Activated CD4-positive, alpha-beta memory T cell treated with anti-CD3 and anti-CD28 coated beads for 36 hours (primary cell): ENCODE measurements at regions of chr7 and their contacts with region 1.

Region 1: DNA sequence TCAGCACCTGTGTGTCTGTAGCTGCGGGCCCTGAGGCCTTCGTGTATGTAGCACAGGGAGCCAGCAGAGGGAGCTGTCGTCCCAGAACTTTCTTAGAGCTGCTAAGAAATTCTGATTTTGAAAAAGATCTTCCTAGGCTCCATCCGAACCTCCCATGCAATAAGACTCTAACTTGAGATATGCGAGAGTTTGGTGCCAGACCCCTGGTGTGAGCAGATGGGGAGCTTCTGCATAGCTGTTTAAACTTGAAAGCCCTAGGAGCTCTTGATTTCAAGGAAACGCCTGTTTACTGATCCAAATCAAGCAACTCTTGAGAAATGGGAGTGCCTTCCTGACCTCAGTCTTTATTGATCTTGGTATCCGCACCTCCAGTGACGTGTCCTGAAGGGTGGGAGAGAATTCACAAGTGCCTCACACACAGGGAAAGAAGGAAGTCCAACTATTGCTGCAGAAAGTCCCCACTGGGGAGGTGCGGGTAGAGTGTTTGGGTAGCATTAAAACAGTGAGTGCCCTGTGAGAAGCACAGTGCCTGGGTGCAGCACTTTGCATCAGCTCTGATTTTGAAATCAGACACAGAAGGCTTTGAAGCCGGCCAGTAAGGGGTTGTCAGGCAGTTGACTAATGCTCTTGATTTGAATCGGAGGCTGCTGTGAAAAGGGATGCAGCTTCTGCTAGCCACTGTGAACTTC is 66.4 kb upstream of the STRIP2 start:
- DNase-seq: peak; percentile 90
- H3K4me3 Mint-ChIP-seq: peak overlapping the region; percentile 52
- H3K27ac Mint-ChIP-seq: peak overlapping the region; percentile 84
- H3K4me1 Mint-ChIP-seq: peaks cover 39% of the 10 kb centered on the region
- H3K27me3 Mint-ChIP-seq: no peaks in the 10 kb centered on the region

Region 2: GRCh38 chr7:129224251-129225205 is 143.3 kb before region 1 on chr7 and contains the start of gene AHCYL2:
- CTCF ChIA-PET with region 1: interaction called, 24 read pairs
- POLR2A ChIA-PET with region 1: no interaction called
- intact Hi-C with region 1: loop called (anchors 1 kb)
- DNase-seq: peak; percentile 99
- H3K4me3 Mint-ChIP-seq: peak within 1 kb of the TSS; percentile 87
- H3K27ac Mint-ChIP-seq: peak within 1 kb of the TSS; percentile 91
- H3K4me1 Mint-ChIP-seq: peaks cover 27% of the 10 kb centered on the region
- H3K27me3 Mint-ChIP-seq: no peaks in the 10 kb centered on the region
- total RNA-seq, gene AHCYL2: 16.4 to 17.1 TPM

Region 3: GRCh38 chr7:129381710-129382484 is 14.1 kb after region 1 on chr7:
- CTCF ChIA-PET with region 1: interaction called, 145 read pairs
- POLR2A ChIA-PET with region 1: interaction called, 5 read pairs
- intact Hi-C with region 1: loop called (anchors 1 kb)
- DNase-seq: no peak
- H3K4me3 Mint-ChIP-seq: no peak overlapping the region
- H3K27ac Mint-ChIP-seq: peak overlapping the region; percentile 69
- H3K4me1 Mint-ChIP-seq: peaks cover 27% of the 10 kb centered on the region
- H3K27me3 Mint-ChIP-seq: no peaks in the 10 kb centered on the region

Region 4: DNA sequence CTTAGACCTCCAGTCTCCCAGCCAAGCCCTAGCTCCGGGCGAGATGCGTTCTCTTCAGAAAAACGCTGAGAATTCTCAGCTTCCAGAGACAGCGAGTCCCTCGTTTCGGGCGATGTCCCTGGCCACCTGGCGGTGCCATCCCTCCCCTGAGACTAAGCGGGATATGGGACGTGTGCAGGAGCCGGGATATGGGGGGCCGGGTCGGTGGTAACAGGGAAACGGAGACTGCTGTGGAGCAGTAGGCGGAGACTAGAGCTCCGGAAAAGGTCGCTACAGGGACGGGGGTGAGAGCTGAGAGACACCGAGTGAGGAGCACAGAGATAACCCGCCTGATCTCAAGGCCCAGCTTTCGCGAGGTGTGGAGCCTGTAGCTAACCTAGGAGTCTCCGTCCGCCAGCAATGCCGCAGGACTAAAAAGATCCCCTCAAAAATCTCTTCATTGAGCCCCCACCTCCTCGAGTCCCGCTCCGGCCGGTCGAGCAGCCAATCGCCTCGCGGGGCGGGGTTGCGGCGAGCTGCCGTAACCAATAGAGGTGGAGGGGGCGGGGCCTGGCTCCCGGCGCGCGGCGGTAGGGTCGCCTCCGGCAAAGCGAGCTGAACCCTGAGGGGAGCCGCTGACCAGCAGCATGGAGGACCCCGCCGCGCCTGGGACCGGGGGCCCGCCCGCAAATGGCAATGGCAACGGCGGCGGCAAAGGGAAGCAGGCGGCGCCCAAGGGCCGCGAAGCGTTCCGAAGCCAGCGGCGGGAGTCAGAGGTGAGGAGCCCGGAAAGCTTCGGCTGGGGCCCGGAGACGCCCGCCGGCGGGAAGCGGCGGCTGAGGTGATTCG is 66.2 kb after region 1 on chr7 and contains the start of gene STRIP2:
- CTCF ChIA-PET with region 1: interaction called, 46 read pairs
- POLR2A ChIA-PET with region 1: interaction called, 14 read pairs
- intact Hi-C with region 1: loop called (anchors 1 kb)
- DNase-seq: peak; percentile 95
- H3K4me3 Mint-ChIP-seq: peak within 1 kb of the TSS; percentile 86
- H3K27ac Mint-ChIP-seq: peak within 1 kb of the TSS; percentile 83
- H3K4me1 Mint-ChIP-seq: peaks cover 28% of the 10 kb centered on the region
- H3K27me3 Mint-ChIP-seq: peaks cover 6% of the 10 kb centered on the region
- total RNA-seq, gene STRIP2: 56.1 to 62.0 TPM

Region 5: GRCh38 chr7:129543816-129544215 is 176.0 kb after region 1 on chr7:
- CTCF ChIA-PET with region 1: no interaction called
- POLR2A ChIA-PET with region 1: no interaction called
- intact Hi-C with region 1: no loop called
- DNase-seq: no peak
- H3K4me3 Mint-ChIP-seq: no peak overlapping the region
- H3K27ac Mint-ChIP-seq: no peak overlapping the region
- H3K4me1 Mint-ChIP-seq: peaks cover 3% of the 10 kb centered on the region
- H3K27me3 Mint-ChIP-seq: peaks cover 11% of the 10 kb centered on the region

Region 6: GRCh38 chr7:129611246-129612111 is 243.6 kb after region 1 on chr7 and contains the start of gene NRF1:
- CTCF ChIA-PET with region 1: interaction called, 11 read pairs
- POLR2A ChIA-PET with region 1: interaction called, 4 read pairs
- intact Hi-C with region 1: loop called (anchors 1 kb)
- DNase-seq: peak; percentile 92
- H3K4me3 Mint-ChIP-seq: peak within 1 kb of the TSS; percentile 95
- H3K27ac Mint-ChIP-seq: peak within 1 kb of the TSS; percentile 97
- H3K4me1 Mint-ChIP-seq: peaks cover 53% of the 10 kb centered on the region
- H3K27me3 Mint-ChIP-seq: no peaks in the 10 kb centered on the region
- total RNA-seq, gene NRF1: 19.9 to 20.4 TPM

Region 7: DNA sequence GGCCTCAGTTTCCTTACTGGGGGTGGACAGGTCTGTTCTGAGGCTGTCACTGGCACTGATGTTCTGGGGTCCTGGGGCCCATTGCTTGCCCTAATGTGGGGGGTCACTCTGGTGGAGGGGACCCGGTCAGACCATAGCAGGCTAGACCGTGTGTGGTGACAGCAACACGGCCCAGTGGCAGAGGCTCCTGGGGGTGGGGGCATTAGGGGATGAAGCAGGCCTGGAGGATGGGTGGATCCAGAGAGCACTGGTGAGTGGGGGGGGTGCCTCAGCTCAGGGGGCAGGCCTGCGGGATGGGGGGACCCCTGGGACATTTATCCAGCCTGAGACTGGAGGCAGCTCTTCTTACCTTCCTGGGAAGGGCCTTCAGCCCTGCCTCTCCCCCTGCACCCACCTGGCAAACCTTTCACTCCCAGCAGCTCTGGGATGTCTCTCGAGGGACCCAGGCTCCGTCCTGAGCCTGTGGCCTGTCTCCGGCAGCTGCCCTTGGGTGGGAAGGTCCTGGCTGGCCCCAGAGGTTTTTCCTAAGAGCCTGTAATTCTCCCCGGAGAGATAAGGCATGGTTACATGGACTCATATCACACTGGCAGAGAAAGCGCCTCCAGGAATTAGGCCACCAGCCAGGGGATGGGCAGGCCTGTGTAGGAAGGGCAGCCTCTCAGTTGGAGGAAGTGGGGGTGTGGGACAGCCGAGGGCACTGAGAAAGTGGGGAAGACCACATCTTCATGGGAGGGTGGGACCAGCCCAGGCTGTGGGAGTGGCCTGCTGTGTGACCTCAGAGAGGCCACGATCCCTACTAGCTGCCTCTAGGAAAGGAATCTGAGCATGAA is 437.3 kb after region 1 on chr7:
- CTCF ChIA-PET with region 1: no interaction called
- POLR2A ChIA-PET with region 1: no interaction called
- intact Hi-C with region 1: no loop called
- DNase-seq: no peak
- H3K4me3 Mint-ChIP-seq: no peak overlapping the region
- H3K27ac Mint-ChIP-seq: no peak overlapping the region
- H3K4me1 Mint-ChIP-seq: no peaks in the 10 kb centered on the region
- H3K27me3 Mint-ChIP-seq: no peaks in the 10 kb centered on the region

Region 8: GRCh38 chr7:129825496-129826267 is 457.8 kb after region 1 on chr7:
- CTCF ChIA-PET with region 1: interaction called, 20 read pairs
- POLR2A ChIA-PET with region 1: no interaction called
- intact Hi-C with region 1: loop called (anchors 5 kb)
- DNase-seq: peak; percentile 92
- H3K4me3 Mint-ChIP-seq: peak overlapping the region; percentile 89
- H3K27ac Mint-ChIP-seq: no peak overlapping the region
- H3K4me1 Mint-ChIP-seq: peaks cover 18% of the 10 kb centered on the region
- H3K27me3 Mint-ChIP-seq: no peaks in the 10 kb centered on the region